SK-N-SH (cell line): ENCODE measurements at regions of chr6 and their contacts with region 1.

Region 1: GRCh38 chr6:134145786-134146185 is 93.4 kb upstream of the SLC2A12 start:
- DNase-seq: no peak
- H3K4me3 ChIP-seq: no peak overlapping the region
- H3K27ac ChIP-seq: no peak overlapping the region
- H3K4me1 ChIP-seq: no peaks in the 10 kb centered on the region; a peak in 1 of 4 replicates
- H3K27me3 ChIP-seq: no peaks in the 10 kb centered on the region
- CTCF ChIP-seq: no peak
- EP300 ChIP-seq: no peak
- RAD21 ChIP-seq: no peak

Region 2: DNA sequence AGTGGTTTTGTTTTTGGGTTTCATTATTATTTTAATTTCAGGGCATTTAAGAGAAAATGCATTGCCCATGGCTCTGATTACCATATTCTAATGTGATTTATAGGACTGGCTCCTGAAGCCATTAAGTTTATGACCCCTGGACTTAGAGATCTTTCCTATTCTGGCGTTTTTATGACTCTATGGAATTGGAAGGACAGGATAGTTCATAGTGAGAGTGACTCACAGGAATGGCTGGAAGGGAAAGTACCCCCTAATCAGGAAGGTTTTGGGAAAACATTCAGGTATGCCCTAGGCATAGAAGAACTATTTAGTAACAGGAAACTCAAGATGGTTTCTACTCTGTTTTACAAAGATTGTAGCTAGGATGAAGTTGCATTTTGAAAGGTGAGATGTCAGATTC is 15.2 kb after region 1 on chr6:
- CTCF ChIA-PET with region 1: interaction called, 12 read pairs
- POLR2A ChIA-PET with region 1: no interaction called
- DNase-seq: no peak
- H3K4me3 ChIP-seq: no peak overlapping the region
- H3K27ac ChIP-seq: no peak overlapping the region
- H3K4me1 ChIP-seq: no peaks in the 10 kb centered on the region
- H3K27me3 ChIP-seq: no peaks in the 10 kb centered on the region
- CTCF ChIP-seq: no peak
- EP300 ChIP-seq: no peak
- RAD21 ChIP-seq: no peak